Activated naive CD4-positive, alpha-beta T cell treated with anti-CD3 and anti-CD28 coated beads for 36 hours (primary cell): ENCODE measurements at regions of chr6 and their contacts with region 1.

Region 1: DNA sequence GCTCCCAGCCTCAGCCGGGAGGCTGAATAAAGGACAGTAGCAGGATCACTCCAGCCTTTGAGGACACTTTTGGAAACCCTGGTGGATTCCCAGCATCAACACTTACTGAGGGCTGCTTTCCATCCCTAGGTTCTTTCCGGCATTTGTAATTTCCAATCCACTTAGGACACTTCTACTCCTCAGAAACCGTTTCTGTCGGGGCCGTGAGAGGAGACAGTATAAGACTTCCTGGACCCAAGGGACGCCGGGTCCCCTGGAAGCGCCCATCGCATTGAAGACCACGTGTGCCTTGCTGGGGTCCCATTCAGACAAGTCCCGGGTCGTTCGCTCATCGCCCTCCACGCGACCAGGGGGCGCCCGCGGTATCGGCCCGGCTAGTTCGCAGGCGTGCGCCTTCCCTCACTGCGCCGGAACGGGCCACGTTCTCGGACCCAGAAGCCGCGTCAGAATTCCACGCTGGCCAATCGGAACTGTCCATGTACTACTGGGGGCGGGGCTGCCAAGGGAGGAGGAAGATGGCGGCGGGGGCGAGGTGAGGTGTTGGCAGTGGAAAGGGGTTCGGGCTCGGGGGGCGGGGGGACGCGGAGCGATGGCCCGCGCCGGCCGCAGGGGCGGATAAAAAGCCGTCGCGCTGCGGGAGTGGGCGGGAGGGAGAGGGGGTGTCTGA is at the start of gene NUS1:
- DNase-seq: peak; percentile 98
- H3K4me3 Mint-ChIP-seq: peak within 1 kb of the TSS; percentile 94
- H3K27ac Mint-ChIP-seq: peak within 1 kb of the TSS; percentile 93
- H3K4me1 Mint-ChIP-seq: peaks cover 46% of the 10 kb centered on the region
- H3K27me3 Mint-ChIP-seq: no peaks in the 10 kb centered on the region
- total RNA-seq, gene NUS1: 24.0 to 24.1 TPM

Region 2: DNA sequence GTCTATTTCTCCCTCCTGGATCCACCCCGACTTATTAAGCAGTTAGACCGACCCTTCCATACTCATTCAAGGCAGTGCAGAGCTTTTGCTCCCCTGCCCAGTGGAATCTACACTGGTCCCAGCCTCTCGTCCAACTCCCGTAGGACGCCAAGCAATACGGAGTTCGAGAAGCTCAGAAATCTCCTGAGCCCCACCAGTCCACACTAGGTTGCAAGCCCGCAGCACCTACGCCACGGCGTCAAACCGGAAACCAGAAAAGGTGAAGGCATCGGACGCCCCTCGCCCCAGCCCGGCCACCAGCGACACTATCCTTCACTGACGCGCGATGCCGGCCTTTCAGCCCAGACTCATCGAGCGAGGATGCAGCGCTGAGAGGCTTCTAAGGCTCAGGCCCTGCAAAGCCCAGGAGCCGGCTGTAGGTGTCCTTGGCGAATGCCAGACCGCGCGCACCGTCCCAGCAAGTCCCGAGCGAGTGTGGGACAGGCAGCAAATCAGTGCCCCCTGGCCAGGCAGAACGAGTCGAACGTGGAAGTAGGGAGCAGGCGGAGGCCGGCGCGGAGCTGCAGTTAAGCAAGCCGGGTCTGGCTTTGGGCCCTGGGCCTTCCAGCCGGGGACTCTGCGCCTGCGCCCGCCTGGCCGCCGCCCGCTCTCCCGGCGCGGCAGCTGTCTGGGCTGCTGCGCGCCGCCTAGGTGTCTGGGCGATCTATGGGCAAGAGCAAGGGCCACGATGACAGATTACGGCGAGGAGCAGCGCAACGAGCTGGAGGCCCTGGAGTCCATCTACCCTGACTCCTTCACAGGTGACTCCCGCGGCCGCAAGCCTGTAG is 1104.1 kb before region 1 on chr6 and contains the start of gene RWDD1:
- CTCF ChIA-PET with region 1: no interaction called
- intact Hi-C with region 1: loop called (anchors 1 kb)
- DNase-seq: peak; percentile 99
- H3K4me3 Mint-ChIP-seq: peak within 1 kb of the TSS; percentile 93
- H3K27ac Mint-ChIP-seq: peak within 1 kb of the TSS; percentile 88
- H3K4me1 Mint-ChIP-seq: peaks cover 49% of the 10 kb centered on the region
- H3K27me3 Mint-ChIP-seq: no peaks in the 10 kb centered on the region
- total RNA-seq, gene RWDD1: 47.8 to 50.3 TPM

Region 3: GRCh38 chr6:117482240-117483003 is 192.7 kb before region 1 on chr6 and contains the start of gene DCBLD1:
- CTCF ChIA-PET with region 1: no interaction called
- intact Hi-C with region 1: loop called (anchors 2 kb)
- DNase-seq: peak; percentile 56
- H3K4me3 Mint-ChIP-seq: peak within 1 kb of the TSS; percentile 79
- H3K27ac Mint-ChIP-seq: no peak within 1 kb of the TSS
- H3K4me1 Mint-ChIP-seq: peaks cover 17% of the 10 kb centered on the region
- H3K27me3 Mint-ChIP-seq: peaks cover 42% of the 10 kb centered on the region
- total RNA-seq, gene DCBLD1: 1.1 to 1.4 TPM

Region 4: GRCh38 chr6:117906853-117907599 is 231.9 kb after region 1 on chr6 and contains the start of gene SLC35F1:
- CTCF ChIA-PET with region 1: no interaction called
- intact Hi-C with region 1: loop called (anchors 5 kb)
- DNase-seq: peak; percentile 40
- H3K4me3 Mint-ChIP-seq: peak within 1 kb of the TSS; percentile 63
- H3K27ac Mint-ChIP-seq: no peak within 1 kb of the TSS
- H3K4me1 Mint-ChIP-seq: peaks cover 11% of the 10 kb centered on the region
- H3K27me3 Mint-ChIP-seq: peaks cover 49% of the 10 kb centered on the region
- total RNA-seq, gene SLC35F1: 0.07 TPM in 1 of 2 experiments, not detected in the other

Region 5: DNA sequence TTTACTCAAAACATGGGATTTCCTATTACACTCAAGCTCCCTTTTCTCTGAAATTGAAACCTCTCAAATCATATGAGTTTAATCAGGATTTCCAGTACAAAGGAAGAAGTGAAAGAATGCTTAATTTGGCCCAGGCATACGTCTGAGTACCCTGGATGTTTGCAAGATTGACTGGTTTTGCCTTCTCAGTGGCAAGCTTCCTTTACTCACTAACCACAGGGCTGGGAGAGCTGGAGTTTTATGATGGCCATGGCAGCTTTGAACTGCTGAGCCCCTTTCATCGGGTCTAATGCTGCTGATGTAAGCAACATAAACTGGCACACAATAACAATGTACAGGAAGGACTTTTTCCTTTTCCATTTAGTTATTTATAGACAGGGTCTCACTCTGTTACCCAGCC is 426.7 kb after region 1 on chr6:
- CTCF ChIA-PET with region 1: no interaction called
- intact Hi-C with region 1: no loop called
- DNase-seq: no peak
- H3K4me3 Mint-ChIP-seq: no peak overlapping the region
- H3K27ac Mint-ChIP-seq: no peak overlapping the region
- H3K4me1 Mint-ChIP-seq: no peaks in the 10 kb centered on the region
- H3K27me3 Mint-ChIP-seq: no peaks in the 10 kb centered on the region

Region 6: DNA sequence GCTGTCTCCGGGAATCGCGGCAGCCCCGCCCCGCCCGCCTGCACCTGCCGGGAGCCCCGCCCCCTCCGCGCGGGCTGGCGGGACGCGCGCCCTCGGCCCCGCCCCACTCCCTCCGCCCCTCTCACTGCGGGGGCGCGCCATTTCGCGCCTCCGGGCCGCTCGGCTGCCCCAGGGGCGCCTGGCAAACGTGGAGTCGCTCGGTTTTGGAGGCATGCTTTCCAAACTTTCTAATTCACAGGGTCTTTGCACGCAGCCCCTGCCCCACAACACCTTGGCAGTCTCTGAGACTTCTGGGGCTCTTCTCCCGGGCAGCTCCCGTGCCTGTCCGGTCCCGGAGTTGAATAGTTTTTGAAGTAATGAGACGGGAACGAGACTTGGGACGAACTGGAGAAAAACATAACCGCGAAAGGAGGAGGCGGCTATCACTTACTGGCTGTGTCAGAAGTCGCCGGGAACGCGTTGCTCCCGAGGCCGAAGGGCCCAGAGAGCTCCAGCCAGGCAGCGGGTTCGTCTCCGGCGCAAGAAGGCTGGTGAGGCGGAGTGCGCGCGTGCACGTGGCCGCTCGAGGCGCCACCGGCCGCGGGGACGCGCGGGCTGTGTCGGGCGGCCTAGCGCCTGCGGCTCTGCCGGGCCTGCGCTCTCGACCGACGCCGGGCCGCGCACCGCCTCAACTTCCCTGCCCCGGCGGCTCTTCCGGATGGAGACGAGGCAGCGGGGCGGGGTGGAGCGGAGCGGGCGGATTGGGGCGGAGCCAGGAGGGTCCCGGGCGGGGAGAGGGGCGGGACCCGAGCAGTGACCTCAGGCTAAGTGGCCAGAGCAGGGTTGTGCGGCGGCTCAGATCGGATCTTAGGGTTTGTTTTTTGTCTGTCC is 1259.6 kb after region 1 on chr6 and contains the start of gene MCM9:
- CTCF ChIA-PET with region 1: no interaction called
- intact Hi-C with region 1: loop called (anchors 2 kb)
- DNase-seq: peak; percentile 89
- H3K4me3 Mint-ChIP-seq: peak within 1 kb of the TSS; percentile 87
- H3K27ac Mint-ChIP-seq: peak within 1 kb of the TSS; percentile 90
- H3K4me1 Mint-ChIP-seq: peaks cover 29% of the 10 kb centered on the region
- H3K27me3 Mint-ChIP-seq: no peaks in the 10 kb centered on the region
- total RNA-seq, gene MCM9: 16.3 to 16.4 TPM